ENCODE measurements at regions of chr20 and their contacts with region 1.

Region 1: GRCh38 chr20:31560094-31560899 is 44.8 kb upstream of the ID1 start:
- DNase-seq: peak; percentile 87
- H3K4me3 Mint-ChIP-seq: peak overlapping the region; percentile 45
- H3K27ac Mint-ChIP-seq: peak overlapping the region; percentile 85
- H3K4me1 Mint-ChIP-seq: peaks cover 30% of the 10 kb centered on the region
- H3K27me3 Mint-ChIP-seq: no peaks in the 10 kb centered on the region
- CTCF ChIP-seq: peak; percentile 94

Region 2: DNA sequence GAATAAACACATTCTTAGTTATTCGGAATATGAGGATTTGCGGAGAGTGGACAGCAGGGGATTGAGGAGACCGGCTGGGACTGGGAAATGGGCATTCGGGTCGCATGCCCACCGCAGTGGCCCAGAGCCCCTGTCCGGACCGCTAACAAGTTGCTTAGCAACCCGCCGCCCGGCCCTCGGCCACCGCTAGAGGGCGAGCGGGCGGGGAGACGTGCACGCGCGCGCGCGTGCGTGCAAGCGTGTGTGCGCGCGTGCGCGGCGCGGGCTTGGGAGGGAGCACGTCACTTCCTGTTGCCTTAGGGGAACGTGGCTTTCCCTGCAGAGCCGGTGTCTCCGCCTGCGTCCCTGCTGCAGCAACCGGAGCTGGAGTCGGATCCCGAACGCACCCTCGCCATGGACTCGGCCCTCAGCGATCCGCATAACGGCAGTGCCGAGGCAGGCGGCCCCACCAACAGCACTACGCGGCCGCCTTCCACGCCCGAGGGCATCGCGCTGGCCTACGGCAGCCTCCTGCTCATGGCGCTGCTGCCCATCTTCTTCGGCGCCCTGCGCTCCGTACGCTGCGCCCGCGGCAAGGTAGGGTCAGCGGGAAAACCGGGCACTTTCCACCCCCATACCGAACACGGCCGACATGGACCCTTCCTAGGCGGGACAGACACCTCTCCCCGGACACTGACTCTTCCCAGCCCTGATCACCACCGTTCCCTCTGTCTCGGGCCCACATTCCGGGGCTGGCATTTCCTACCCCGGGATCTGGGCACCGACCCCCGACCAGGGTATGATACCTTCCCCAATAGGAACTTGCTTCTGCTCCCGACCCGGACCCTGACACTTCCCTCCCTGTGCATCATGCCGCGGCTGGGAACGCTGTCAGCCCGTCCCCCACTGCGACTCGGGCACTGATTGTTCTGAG is 45.9 kb before region 1 on chr20 and contains the start of gene HM13:
- CTCF ChIA-PET with region 1: interaction called, 12 read pairs
- POLR2A ChIA-PET with region 1: interaction called, 5 read pairs
- intact Hi-C with region 1: loop called (anchors 2 kb)
- DNase-seq: peak; percentile 91
- H3K4me3 Mint-ChIP-seq: no peak within 1 kb of the TSS
- H3K27ac Mint-ChIP-seq: no peak within 1 kb of the TSS
- H3K4me1 Mint-ChIP-seq: no peaks in the 10 kb centered on the region
- H3K27me3 Mint-ChIP-seq: no peaks in the 10 kb centered on the region
- CTCF ChIP-seq: peak; percentile 97
- total RNA-seq, gene HM13: 276 and 338 TPM in 2 replicates

Region 3: GRCh38 chr20:31547017-31547675 is 13.2 kb before region 1 on chr20:
- CTCF ChIA-PET with region 1: interaction called, 278 read pairs
- POLR2A ChIA-PET with region 1: interaction called, 32 read pairs
- intact Hi-C with region 1: no loop called
- DNase-seq: peak; percentile 87
- H3K4me3 Mint-ChIP-seq: peak overlapping the region; percentile 82
- H3K27ac Mint-ChIP-seq: peak overlapping the region; percentile 97
- H3K4me1 Mint-ChIP-seq: peaks cover 14% of the 10 kb centered on the region
- H3K27me3 Mint-ChIP-seq: no peaks in the 10 kb centered on the region
- CTCF ChIP-seq: no peak

Region 4: DNA sequence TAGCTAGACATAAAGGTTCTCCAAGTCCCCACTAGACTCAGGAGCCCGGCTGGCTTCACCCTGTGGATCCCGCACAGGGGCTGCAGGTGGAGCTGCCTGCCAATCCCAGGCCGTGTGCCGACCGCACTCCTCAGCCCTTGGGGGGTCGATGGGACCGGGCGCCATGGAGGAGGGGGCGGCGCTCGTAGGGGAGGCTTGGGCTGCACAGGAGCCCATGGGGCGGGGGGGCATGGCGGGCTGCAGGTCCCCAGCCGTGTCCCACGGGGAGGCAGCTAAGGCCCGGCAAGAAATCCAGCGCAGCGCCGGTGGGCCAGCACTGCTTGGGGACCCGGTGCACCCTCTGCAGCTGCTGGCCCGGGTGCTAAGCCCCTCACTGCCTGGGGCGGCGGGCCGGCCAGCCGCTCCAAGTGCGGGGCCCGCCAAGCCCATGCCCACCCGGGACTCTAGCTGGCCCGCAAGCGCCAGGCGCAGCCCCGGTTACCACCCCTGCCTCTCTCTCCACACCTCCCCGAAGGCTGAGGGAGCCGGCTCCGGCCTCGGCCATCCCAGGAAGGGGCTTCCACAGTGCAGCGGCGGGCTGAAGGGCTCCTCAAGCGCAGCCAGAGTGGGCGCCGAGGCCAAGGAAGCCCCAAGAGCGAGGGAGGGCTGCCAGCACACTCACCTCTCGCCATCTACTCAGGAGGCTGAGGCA is 18.3 kb after region 1 on chr20:
- CTCF ChIA-PET with region 1: interaction called, 220 read pairs
- POLR2A ChIA-PET with region 1: interaction called, 34 read pairs
- intact Hi-C with region 1: no loop called
- DNase-seq: no peak
- H3K4me3 Mint-ChIP-seq: no peak overlapping the region
- H3K27ac Mint-ChIP-seq: no peak overlapping the region
- H3K4me1 Mint-ChIP-seq: peaks cover 8% of the 10 kb centered on the region
- H3K27me3 Mint-ChIP-seq: no peaks in the 10 kb centered on the region
- CTCF ChIP-seq: no peak

Region 5: DNA sequence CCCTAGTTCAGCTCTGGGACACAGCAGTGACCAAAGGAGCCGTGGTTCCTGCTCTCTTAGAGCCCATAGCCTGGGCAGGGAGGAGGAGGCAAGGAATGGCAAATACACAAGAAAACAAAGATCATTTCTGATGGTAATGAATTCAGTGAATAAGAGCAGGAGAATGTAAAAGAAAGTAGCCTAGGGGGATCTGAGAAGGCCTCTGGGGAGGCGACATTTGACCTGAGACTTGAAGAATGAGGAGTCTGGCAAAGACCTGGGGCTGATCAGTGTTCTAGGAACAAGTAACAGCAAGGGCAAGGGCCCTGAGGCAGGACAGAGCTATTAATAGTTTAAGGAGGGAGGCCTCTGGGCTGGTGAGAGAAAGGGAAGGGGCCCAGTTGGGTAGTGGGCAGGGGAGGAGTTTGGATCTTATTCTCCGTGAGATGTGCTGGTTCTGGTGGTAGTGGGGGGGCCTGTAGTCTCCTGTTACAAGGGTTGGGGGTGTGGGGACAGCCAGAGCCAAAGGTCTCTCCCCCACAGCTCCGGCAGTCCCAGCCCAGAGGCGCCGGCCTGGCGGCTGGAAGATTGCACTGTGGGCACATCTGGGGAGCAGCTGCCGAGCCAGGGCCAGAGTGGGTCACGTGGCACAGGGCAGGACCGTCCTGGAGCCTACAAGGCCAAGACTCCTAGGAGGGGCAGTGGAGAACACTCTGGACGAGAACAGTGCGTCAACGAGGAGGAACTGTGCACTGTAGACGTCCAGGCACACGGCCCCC is 35.5 kb after region 1 on chr20:
- CTCF ChIA-PET with region 1: interaction called, 1,902 read pairs
- POLR2A ChIA-PET with region 1: interaction called, 1,321 read pairs
- intact Hi-C with region 1: no loop called
- DNase-seq: peak; percentile 92
- H3K4me3 Mint-ChIP-seq: peak overlapping the region; percentile 43
- H3K27ac Mint-ChIP-seq: peak overlapping the region; percentile 94
- H3K4me1 Mint-ChIP-seq: peaks cover 28% of the 10 kb centered on the region
- H3K27me3 Mint-ChIP-seq: no peaks in the 10 kb centered on the region
- CTCF ChIP-seq: no peak

Region 6: DNA sequence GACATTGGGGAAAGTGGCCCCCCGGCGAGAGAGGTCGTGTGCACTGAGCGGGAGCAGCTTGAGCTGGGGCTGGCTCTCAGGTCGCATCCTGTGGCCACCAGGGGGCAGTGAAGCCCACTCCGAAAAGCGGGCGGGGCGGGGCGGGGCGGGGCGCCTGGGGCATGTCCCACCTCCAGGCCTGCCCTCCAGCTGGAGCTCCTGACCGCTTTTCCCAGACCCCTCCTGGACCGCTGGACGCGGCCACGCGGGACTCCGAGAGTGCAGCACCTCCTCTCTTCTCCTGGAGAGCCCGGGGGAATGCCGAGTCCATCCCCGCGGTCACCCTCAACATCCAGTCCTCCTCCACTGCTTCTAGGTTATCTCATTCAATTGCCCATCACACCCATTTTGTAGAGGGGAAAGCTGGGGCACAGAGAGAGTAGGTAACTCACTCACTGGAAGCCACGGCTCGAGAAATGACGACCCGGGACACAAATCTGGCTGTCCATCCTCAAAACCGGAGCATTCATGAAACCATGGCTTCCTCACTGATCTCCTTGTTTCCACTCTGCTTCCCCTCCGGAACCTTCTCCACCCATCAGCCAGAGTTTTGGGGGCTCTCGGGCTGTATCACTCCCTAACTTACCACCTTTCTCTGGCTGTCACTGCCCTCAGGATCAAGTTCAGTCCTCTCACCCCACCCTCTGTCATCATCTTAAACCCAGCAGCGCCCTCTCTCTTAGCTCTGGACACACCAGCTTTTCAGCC is 101.5 kb after region 1 on chr20:
- CTCF ChIA-PET with region 1: interaction called, 19 read pairs
- POLR2A ChIA-PET with region 1: no interaction called
- intact Hi-C with region 1: no loop called
- DNase-seq: peak; percentile 71
- H3K4me3 Mint-ChIP-seq: peak overlapping the region; percentile 58
- H3K27ac Mint-ChIP-seq: no peak overlapping the region
- H3K4me1 Mint-ChIP-seq: peaks cover 19% of the 10 kb centered on the region
- H3K27me3 Mint-ChIP-seq: no peaks in the 10 kb centered on the region
- CTCF ChIP-seq: peak; percentile 75

Region 7: DNA sequence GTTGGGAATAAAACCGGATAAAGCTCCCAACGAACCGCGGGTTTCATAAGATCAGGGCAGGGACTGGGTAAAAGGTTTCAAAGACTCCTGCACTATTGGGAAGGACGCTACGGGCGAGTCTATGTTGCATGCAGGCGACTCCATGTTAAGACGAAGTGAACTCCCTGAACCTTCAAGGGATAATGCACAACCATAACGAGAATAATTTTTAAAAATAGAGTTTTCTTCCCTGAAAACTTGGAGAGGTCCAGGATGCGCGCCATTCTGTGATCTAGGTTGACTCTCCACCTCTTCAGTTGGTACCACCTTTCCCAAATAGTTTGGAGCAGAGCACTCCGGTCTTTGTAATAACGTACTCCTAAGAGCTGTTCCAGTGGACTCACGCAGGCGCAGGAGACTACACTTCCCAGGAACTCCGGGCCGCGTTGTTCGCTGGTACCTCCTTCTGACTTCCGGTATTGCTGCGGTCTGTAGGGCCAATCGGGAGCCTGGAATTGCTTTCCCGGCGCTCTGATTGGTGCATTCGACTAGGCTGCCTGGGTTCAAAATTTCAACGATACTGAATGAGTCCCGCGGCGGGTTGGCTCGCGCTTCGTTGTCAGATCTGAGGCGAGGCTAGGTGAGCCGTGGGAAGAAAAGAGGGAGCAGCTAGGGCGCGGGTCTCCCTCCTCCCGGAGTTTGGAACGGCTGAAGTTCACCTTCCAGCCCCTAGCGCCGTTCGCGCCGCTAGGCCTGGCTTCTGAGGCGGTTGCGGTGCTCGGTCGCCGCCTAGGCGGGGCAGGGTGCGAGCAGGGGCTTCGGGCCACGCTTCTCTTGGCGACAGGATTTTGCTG is 178.6 kb after region 1 on chr20 and contains the start of gene TPX2:
- CTCF ChIA-PET with region 1: interaction called, 4 read pairs
- POLR2A ChIA-PET with region 1: interaction called, 10 read pairs
- intact Hi-C with region 1: no loop called
- DNase-seq: peak; percentile 98
- H3K4me3 Mint-ChIP-seq: no peak within 1 kb of the TSS
- H3K27ac Mint-ChIP-seq: no peak within 1 kb of the TSS
- H3K4me1 Mint-ChIP-seq: no peaks in the 10 kb centered on the region
- H3K27me3 Mint-ChIP-seq: no peaks in the 10 kb centered on the region
- CTCF ChIP-seq: no peak
- total RNA-seq, gene TPX2: 45.3 and 79.6 TPM in 2 replicates

Measured in MCF 10A (cell line).